ENCODE measurements at regions of chr17 and their contacts with region 1.

Region 1: GRCh38 chr17:62671583-62672312 is 44.3 kb downstream of the MRC2 start:
- DNase-seq: peak; percentile 54 to 83
- ATAC-seq: no peak
- H3K4me3 ChIP-seq: no peak overlapping the region
- H3K27ac ChIP-seq: no peak overlapping the region
- H3K4me1 ChIP-seq: no peaks in the 10 kb centered on the region
- H3K27me3 ChIP-seq: no peaks in the 10 kb centered on the region

Region 2: GRCh38 chr17:62562656-62563055 is 109.1 kb before region 1 on chr17:
- intact Hi-C with region 1: loop called in 1 of 2 experiments (anchors 10 kb)
- DNase-seq: no peak
- ATAC-seq: no peak
- H3K4me3 ChIP-seq: no peak overlapping the region
- H3K27ac ChIP-seq: no peak overlapping the region
- H3K4me1 ChIP-seq: no peaks in the 10 kb centered on the region
- H3K27me3 ChIP-seq: no peaks in the 10 kb centered on the region